ENCODE measurements at regions of chr17 and their contacts with region 1.

Region 1: DNA sequence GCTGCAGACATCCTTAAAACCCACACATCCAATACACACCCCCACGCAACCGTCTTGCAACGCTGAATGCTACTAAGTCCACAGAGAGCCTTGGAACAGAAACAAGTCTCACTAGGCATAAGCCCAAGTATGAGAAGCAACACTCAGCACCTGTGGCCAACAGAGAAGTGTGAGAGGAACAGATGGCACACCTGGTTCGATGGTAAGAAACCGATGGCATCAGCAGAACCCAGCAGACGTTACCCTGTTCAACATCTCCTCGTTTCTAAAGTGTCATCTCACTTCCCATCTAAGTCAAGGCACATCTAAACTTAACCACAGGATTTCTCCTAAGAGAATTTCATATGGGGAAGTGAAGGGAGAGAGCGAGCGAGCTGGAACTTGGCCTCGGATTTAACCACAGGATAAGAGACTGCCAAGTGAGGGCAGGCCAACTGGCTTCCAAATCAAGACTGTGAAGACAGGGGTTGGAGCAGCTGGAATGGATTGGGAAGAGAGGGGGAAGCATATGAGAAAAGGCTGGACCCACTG is 41.0 kb downstream of the NXPH3 start:
- DNase-seq: peak in 7 of 10 donors; percentile 30 to 91 (median 51)

Region 2: DNA sequence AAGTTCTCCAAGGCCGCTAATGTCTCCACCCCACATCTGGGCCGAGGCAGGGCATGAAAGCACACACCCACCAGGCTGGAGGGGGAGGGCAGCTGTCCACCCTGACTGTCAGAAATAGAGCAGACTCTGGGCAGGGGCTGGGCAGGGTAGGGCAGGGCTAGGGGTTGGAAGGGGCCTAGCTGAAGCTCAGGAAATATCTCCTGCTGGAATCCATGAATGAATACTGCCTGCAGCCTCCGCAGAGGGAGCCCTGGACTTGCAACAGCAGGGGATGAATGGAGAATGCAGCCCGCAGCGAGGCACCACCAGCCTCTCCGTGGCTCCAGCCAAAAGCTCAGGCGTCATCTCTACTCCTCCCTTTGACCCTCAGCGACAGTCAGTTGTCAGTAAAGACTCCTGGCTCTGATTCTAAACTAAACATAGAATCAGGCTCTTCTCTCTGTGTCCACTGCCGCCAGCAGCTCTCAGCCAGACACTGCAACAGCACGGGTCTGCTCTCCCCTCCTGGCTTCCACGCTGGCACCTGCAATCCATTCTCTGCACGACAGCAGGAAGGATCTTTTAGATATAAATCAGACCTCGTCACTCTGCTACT is 145.5 kb before region 1 on chr17:
- intact Hi-C with region 1: no loop called
- DNase-seq: peak; percentile 14 to 95 (median 62)

Region 3: DNA sequence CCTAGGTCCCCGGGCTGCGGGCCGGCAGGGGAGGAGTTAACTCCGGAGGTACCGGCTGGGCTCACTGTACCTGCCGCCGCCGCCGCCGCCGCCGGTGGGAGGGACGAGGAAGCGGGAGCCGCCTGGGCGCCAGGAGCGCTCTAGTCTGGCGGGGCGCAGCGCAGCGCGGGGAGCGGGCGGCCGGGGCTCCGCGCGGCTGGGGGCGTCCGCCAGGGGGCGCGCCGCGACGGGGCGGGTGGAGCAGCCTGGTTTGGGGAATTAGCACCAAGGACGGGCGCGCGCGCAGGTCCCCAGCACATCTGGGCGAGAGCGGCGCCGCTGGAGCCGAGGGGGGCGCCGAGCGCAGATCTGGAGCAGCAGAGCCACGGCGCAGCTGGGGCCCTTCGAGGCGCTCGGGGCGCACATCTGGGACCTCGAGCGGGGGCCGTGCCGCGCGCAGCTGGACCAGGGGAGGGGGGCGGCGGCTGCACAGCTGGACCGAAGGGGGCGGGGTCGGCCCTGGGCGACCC is 41.0 kb before region 1 on chr17 and contains the start of gene NXPH3:
- intact Hi-C with region 1: loop called (anchors 5 kb)
- DNase-seq: peak; percentile 43 to 94 (median 59)

Region 4: DNA sequence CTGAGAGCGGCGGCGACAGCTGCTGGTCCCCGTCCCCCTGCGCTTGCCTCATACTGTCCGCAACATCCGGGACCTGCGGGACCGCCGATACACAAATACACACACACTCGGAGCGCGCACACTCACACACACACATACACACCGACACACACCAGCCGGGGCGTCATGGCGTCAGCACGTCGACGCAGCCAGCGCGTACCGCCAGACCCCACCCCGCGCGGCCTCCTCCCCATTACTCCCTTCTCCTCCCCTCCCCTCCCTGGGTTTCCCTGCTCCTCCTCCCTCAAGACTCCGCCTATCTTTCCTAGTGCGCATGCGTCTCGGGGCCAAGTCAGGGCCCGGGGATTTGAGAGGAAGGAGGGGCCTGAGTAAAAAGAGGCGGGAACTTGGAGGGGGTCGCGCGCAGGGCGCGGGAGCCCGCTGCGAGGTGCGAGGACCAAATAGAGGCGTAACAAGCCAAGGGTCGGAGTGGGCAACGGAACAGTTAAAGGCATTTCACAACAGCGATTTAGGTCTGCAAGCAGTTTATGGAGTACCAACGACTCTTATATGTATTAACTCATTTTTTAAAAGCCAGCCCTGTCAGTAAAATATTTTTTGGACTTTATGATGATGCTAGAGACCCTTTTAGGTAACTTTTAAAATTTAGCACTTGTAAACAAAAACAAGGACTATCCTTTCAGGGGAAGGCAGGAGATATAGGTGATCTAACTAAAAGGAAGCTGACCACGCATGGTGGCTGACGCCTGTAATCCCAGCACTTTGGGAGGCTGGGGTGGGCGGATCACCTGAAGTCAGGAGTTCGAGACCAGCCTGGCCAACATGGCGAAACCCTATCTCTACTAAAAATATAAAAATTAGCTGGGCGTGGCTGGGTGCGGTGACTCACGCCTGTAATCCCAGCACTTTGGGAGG is 61.5 kb after region 1 on chr17 and contains the start of gene SPOP:
- intact Hi-C with region 1: loop called (anchors 10 kb)
- DNase-seq: peak; percentile 97 to 100 (median 99)

Measured in posterior cingulate gyrus (tissue), 11 donors.